OCI-LY7 (cell line): ENCODE measurements at regions of chr16 and their contacts with region 1.

Region 1: DNA sequence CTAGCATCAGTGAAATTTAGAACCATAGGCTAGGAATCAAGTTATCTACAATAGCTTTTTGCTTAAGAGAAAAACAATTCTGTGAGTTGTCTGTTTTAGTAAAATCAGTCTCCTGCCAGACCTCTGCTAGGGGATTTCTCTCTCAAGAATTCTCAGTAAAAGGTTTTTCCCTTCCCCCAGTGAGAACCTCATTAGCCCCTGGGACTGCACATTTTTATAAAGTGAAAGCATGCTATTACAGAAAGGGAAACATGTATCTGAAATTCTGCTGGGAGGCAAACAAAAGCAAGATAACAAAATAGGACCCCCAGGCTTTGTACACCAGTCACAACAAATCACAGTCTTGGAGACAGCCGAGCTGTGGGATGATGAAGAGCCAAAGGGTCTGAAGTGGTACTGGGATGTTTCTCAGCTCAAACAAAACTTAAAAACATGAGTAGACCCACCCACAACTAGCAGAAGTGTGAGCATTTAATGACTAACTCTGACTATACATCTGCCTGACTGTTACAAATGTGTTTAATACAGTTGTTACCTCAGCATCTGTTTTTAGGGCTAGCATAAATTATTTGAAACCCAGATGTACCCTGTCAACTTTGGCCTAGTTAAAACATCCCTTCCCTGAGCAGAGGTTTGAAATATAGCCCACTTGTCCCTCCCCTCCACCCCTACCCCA is 20.0 kb upstream of the GLG1 start:
- DNase-seq: no peak
- H3K4me3 ChIP-seq: no peak overlapping the region
- H3K27ac ChIP-seq: no peak overlapping the region
- H3K4me1 ChIP-seq: no peaks in the 10 kb centered on the region
- CTCF ChIP-seq: no peak

Region 2: DNA sequence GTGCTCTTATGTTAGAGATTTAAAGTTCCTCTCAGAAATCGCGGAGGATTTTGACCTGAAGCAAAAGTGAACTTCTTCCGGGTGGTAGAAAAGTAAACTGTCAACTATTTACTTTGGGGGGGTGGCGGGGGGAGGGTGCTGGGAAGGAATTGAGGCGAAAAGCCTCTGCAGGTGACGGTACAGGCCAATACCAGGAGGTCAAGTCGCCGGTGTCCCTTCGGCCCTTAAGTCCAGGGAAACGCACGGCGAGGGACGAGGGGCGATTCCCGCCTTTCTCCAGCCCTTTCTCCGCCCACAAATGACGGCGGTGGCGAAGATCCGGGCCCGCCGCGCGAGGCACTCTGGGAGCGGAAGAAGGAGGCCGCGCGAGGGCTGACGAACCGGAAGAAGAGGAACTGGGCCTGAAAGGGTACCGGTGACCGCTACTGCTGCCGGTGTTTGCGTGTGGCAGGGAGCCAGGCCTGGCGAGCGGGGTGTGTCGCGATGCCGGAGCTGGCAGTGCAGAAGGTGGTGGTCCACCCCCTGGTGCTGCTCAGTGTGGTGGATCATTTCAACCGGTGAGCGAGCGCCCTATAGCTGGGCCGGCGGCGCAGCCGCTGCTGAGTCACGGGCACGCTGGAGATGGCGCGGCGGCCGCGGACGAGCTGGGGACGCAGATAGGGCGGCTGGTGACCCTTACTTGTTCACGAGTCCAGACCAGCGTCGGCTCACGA is 330.3 kb before region 1 on chr16 and contains the start of gene PSMD7:
- CTCF ChIA-PET with region 1: no interaction called
- POLR2A ChIA-PET with region 1: no interaction called
- intact Hi-C with region 1: no loop called
- DNase-seq: peak; percentile 90
- H3K4me3 ChIP-seq: peak within 1 kb of the TSS; percentile 92
- H3K27ac ChIP-seq: peak within 1 kb of the TSS; percentile 82
- H3K4me1 ChIP-seq: peaks cover 30% of the 10 kb centered on the region
- CTCF ChIP-seq: no peak
- total RNA-seq, gene PSMD7: 66.3 and 80.6 TPM in 2 replicates

Region 3: GRCh38 chr16:74320707-74321106 is 306.2 kb before region 1 on chr16:
- CTCF ChIA-PET with region 1: no interaction called
- POLR2A ChIA-PET with region 1: interaction called, 19 read pairs
- intact Hi-C with region 1: no loop called
- DNase-seq: no peak
- H3K4me3 ChIP-seq: no peak overlapping the region
- H3K27ac ChIP-seq: no peak overlapping the region
- H3K4me1 ChIP-seq: no peaks in the 10 kb centered on the region
- CTCF ChIP-seq: no peak

Region 4: DNA sequence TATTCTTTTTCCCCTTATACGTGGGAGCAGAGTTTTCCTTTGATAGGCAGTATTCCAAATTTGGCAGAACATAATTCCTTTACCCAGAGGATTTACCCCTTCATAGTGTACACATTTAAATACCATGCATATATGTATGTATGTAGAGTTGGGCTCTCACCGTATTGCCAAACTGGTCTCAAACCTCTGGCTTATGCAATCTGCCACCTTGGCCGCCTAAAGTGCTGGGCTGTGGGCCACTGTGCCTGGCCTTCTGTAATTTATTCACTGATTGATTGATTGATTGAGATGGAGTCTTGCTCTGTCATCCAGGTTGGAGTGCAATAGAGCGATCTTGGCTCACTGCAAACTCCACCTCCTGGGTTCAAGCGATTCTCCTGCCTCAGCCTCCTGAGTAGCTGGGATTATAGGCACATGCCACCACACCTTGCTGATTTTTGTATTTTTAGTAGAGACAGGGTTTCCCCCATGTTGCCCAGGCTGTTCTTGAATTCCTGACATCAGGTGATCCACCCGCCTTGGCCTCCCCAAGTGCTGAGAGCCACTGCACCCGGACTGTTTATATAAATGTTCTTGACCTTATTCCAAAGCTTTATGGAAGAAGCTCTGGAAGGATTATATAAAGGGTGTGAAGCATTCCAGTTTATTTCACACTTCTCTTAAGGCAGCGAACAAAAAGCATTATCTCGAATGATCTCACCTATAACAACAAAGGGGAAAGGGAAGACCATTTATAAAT is 34.8 kb before region 1 on chr16:
- CTCF ChIA-PET with region 1: no interaction called
- POLR2A ChIA-PET with region 1: no interaction called
- intact Hi-C with region 1: no loop called
- DNase-seq: no peak
- H3K4me3 ChIP-seq: no peak overlapping the region
- H3K27ac ChIP-seq: no peak overlapping the region
- H3K4me1 ChIP-seq: no peaks in the 10 kb centered on the region
- CTCF ChIP-seq: no peak